ENCODE measurements at regions of chr19 and their contacts with region 1.

Region 1: DNA sequence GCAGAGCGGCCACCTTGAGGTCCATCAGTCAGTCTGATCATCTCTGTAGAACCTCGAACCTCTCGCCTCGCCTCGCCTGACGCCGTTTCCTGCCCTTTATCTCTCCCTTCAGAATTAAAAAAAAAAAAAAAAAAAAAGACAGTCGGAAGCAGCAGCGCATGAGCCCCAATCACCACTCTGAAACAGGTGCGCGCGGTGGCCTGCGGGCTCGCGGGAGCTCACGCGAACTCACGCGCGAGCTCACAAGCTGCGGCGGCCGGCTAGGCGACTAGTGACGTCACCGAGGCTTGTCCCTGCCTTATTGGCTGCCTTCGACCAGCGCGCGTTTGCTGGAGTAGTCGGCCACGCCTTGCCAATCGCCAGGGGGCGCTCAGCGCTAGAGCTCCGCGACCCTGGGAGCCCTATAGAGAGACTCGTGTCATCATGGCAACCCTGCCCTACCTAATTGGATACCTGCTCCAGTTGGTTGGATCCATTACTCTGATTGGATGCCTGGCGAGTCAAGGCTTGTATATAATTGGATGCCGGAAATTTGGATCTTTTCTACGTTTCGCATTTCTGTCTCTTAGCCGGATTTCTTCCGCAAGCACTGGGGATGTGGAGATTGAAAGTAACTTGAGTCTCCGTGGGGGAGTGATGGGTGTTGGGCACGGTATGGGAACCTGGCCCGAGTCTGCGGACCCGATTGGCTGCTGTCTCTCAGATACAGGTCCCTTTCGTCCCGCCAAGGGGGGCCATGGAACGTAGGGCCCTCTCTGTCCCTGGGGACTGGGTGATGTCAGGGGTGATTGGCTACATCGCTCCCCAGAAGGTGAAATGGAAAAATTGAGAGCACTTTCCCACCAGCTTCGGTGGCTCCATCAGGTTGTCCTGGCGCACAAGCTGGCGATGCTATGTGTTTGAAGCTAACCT is 31.6 kb downstream of the SYT3 start:
- DNase-seq: peak; percentile 97 to 99
- ATAC-seq: peak; percentile 86 to 90
- H3K4me3 ChIP-seq: peak overlapping the region; percentile 28
- H3K27ac ChIP-seq: peak overlapping the region in 1 of 2 experiments; percentile 37; a peak in 3 of 6 replicates
- H3K4me1 ChIP-seq: peaks cover 5% of the 10 kb centered on the region; the same call in 1 of the 3 replicates
- CTCF ChIP-seq: peak; percentile 82
- EP300 ChIP-seq: no peak
- POLR2A ChIP-seq: no peak
- RAD21 ChIP-seq: peak; percentile 80 to 82

Region 2: DNA sequence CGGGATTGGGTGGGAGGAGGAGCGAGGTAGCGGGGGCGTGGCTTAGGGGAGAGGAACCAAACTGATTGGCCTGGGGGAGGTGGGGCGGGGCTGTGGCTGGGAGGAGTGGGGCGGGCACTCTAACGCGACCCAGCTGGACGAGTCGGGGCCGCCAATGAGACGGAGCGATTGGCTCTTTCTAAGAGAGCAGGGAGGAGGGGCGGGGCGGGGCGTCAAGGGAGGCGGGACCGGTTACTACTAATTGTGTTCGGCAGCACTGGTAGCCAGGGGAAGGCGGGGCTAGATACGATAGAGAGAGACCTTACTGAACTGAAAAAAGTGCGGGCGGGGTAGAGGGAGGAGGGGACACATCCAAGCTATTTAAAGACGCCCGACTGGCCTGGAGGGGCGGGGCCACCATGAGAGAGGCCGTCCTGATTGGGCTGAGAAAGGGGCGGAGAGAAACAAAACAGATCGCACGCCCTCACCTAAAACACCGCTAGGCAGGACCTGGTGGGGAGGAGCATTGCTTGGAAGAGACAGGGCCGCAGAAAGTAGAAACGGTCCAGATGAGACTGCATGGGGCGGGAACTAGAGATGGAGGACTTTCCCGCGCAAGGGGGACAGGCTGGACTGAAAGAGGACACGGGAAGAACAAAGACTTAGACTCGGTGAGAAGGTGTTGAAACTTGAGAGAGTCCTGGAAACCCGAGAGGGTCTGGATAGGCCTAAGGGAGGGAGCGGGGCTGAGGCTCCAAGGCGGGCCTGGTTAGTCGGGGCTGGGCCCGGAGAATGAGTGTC is 278.8 kb before region 1 on chr19 and contains the start of gene KCNC3:
- CTCF ChIA-PET with region 1: no interaction called
- POLR2A ChIA-PET with region 1: no interaction called
- DNase-seq: peak; percentile 99 to 100
- ATAC-seq: peak; percentile 54 to 83
- H3K4me3 ChIP-seq: peak within 1 kb of the TSS; percentile 60
- H3K27ac ChIP-seq: peak within 1 kb of the TSS; percentile 50 to 75; a peak in 5 of 6 replicates
- H3K4me1 ChIP-seq: peaks cover 45% of the 10 kb centered on the region
- CTCF ChIP-seq: no peak
- EP300 ChIP-seq: no peak
- POLR2A ChIP-seq: no peak; the same call in 1 of the 2 replicates
- RAD21 ChIP-seq: no peak
- polyA plus RNA-seq, gene KCNC3: 0.17 and 0.32 TPM in 2 replicates

Region 3: DNA sequence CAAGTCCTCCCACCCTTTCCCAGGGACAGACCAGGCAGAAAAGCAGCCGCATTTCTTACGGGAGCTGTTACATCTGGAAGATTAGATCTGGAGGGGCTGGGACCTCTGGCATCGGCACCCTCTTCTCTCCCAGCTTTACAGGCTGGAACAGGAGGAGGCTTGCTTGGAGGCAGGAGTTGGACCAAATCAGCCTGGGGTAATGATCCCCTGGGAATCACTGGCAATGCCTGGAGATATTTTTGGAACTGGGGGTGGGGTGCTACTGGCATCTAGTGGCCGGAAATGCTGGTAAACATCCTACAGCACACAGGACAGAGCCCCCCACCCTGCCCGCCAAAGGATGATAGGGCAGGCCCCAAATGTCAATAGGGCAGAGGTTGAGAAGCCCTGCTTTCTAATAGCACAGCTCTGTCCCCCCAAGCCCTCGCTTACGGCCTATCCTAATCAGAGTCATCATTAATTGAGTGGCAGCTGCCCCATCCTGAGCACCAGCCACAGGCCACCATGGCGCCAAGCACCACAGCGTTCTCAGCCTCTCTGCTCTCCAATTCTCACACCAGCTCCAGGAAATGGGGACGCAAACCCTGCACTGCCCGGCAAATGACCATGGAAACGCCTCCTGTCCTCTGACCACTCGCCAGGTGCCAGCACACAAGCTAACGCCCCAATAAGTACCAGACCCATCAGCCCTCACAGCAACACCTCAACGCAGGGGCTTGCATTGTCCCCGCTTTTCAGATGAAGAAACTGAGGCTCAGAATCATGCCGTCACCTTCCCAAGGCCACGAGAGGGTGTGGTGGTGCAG is 60.5 kb before region 1 on chr19:
- CTCF ChIA-PET with region 1: no interaction called
- POLR2A ChIA-PET with region 1: no interaction called
- DNase-seq: no peak
- ATAC-seq: peak; percentile 4 to 13; a peak in 4 of 6 replicates
- H3K4me3 ChIP-seq: no peak overlapping the region
- H3K27ac ChIP-seq: no peak overlapping the region
- H3K4me1 ChIP-seq: peaks cover 3% of the 10 kb centered on the region; the same call in 1 of the 3 replicates
- CTCF ChIP-seq: no peak
- EP300 ChIP-seq: no peak
- POLR2A ChIP-seq: no peak
- RAD21 ChIP-seq: peak; percentile 14 to 22; a peak in 1 of 5 replicates

Region 4: DNA sequence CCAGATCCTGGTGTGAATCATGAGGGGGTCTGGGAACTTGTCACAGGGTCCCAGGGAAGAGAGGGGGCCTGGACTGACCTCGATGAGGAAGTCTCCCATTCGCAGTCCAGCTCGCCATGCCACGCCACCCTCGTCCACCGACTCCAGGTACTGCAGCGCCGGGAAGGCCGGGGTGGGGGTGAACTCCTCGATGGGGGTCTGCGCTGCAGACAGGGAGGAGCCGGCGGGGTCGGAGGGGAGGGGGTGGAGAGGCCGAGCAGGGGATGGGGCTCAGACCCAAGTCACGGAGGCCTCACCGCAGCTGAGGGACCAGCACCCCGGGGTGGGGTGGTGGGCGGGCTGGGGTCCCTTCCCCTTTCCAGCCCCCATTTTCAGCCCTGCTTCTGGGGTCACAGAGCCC is 80.6 kb after region 1 on chr19:
- CTCF ChIA-PET with region 1: no interaction called
- POLR2A ChIA-PET with region 1: no interaction called
- DNase-seq: no peak
- ATAC-seq: no peak
- H3K4me3 ChIP-seq: no peak overlapping the region
- H3K27ac ChIP-seq: no peak overlapping the region
- H3K4me1 ChIP-seq: peaks cover 4% of the 10 kb centered on the region; the same call in 2 of the 3 replicates
- CTCF ChIP-seq: no peak
- EP300 ChIP-seq: no peak
- POLR2A ChIP-seq: no peak
- RAD21 ChIP-seq: no peak

Region 5: GRCh38 chr19:50717026-50717723 is 109.0 kb after region 1 on chr19:
- CTCF ChIA-PET with region 1: interaction called, 11 read pairs
- POLR2A ChIA-PET with region 1: no interaction called
- DNase-seq: no peak
- ATAC-seq: 0 out of 6 replicates have a peak, but pooled peaks of 1 of the 2 experiments have one; percentile 5
- H3K4me3 ChIP-seq: no peak overlapping the region
- H3K27ac ChIP-seq: no peak overlapping the region
- H3K4me1 ChIP-seq: peaks cover 13% of the 10 kb centered on the region; the same call in 2 of the 3 replicates
- CTCF ChIP-seq: no peak
- EP300 ChIP-seq: no peak
- POLR2A ChIP-seq: no peak
- RAD21 ChIP-seq: no peak

Region 6: GRCh38 chr19:50785329-50785728 is 177.2 kb after region 1 on chr19:
- CTCF ChIA-PET with region 1: interaction called, 28 read pairs
- POLR2A ChIA-PET with region 1: no interaction called
- DNase-seq: no peak
- ATAC-seq: no peak
- H3K4me3 ChIP-seq: no peak overlapping the region
- H3K27ac ChIP-seq: no peak overlapping the region
- H3K4me1 ChIP-seq: peaks cover 7% of the 10 kb centered on the region; the same call in 2 of the 3 replicates
- CTCF ChIP-seq: no peak
- EP300 ChIP-seq: no peak
- POLR2A ChIP-seq: no peak
- RAD21 ChIP-seq: no peak